ENCODE measurements at regions of chr17 and their contacts with region 1.

Region 1: DNA sequence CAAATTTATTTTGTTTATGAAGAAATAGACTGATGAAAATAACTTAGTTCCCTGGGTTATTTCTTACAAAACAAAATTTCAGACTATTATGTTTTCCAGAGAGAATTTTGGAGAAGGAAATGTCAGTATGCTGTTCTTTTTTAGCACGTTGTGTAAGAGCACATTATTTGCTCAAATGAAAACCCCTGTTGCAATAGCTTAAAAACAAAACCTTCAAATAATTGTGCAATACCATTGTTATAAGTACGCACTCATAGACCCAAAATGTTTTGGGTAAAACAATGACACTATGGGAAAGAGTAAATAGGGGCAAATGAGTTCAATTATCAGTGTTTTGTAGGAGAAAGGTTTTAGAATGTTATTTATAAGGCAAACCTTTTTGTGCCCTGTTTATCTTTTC is 18.2 kb downstream of the VMP1 start:
- DNase-seq: peak; percentile 10
- H3K4me3 ChIP-seq: no peak overlapping the region
- H3K27me3 ChIP-seq: no peaks in the 10 kb centered on the region
- CTCF ChIP-seq: no peak

Region 2: GRCh38 chr17:59676716-59677115 is 49.0 kb before region 1 on chr17:
- CTCF ChIA-PET with region 1: no interaction called
- POLR2A ChIA-PET with region 1: no interaction called
- DNase-seq: peak; percentile 14
- H3K4me3 ChIP-seq: no peak overlapping the region
- H3K27me3 ChIP-seq: no peaks in the 10 kb centered on the region
- CTCF ChIP-seq: no peak

Region 3: GRCh38 chr17:59892924-59893676 is 167.4 kb after region 1 on chr17 and contains the starts of genes RPS6KB1 and TUBD1:
- CTCF ChIA-PET with region 1: no interaction called
- POLR2A ChIA-PET with region 1: interaction called, 19 read pairs
- DNase-seq: peak; percentile 99
- H3K4me3 ChIP-seq: peak within 1 kb of the TSS; percentile 98
- H3K27me3 ChIP-seq: no peaks in the 10 kb centered on the region
- CTCF ChIP-seq: no peak
- polyA plus RNA-seq, gene RPS6KB1: 7.4 and 15.7 TPM in 2 replicates
- polyA plus RNA-seq, gene TUBD1: 2.3 and 4.2 TPM in 2 replicates

Measured in BJ (cell line).